ENCODE measurements at regions of chr2 and their contacts with region 1.

Region 1: GRCh38 chr2:85066874-85067351 is 66.3 kb upstream of the TCF7L1 start:
- DNase-seq: peak; percentile 83 to 85
- H3K4me3 ChIP-seq: peak overlapping the region; percentile 30
- H3K4me3 Mint-ChIP-seq: peak overlapping the region; percentile 67
- H3K27ac Mint-ChIP-seq: no peak overlapping the region
- H3K4me1 ChIP-seq: 0 out of 2 replicates have a peak, but pooled peaks cover 5% of the 10 kb centered on the region
- H3K4me1 Mint-ChIP-seq: no peaks in the 10 kb centered on the region
- H3K27me3 ChIP-seq: no peaks in the 10 kb centered on the region
- H3K27me3 Mint-ChIP-seq: peaks cover 2% of the 10 kb centered on the region
- CTCF ChIP-seq: peak; percentile 88 to 91

Region 2: GRCh38 chr2:85199698-85200097 is 132.8 kb after region 1 on chr2:
- CTCF ChIA-PET with region 1: no interaction called
- POLR2A ChIA-PET with region 1: no interaction called
- intact Hi-C with region 1: no loop called
- DNase-seq: no peak
- H3K4me3 ChIP-seq: no peak overlapping the region
- H3K4me3 Mint-ChIP-seq: no peak overlapping the region
- H3K27ac Mint-ChIP-seq: no peak overlapping the region
- H3K4me1 ChIP-seq: no peaks in the 10 kb centered on the region
- H3K4me1 Mint-ChIP-seq: no peaks in the 10 kb centered on the region
- H3K27me3 ChIP-seq: no peaks in the 10 kb centered on the region
- H3K27me3 Mint-ChIP-seq: no peaks in the 10 kb centered on the region
- CTCF ChIP-seq: no peak

Region 3: DNA sequence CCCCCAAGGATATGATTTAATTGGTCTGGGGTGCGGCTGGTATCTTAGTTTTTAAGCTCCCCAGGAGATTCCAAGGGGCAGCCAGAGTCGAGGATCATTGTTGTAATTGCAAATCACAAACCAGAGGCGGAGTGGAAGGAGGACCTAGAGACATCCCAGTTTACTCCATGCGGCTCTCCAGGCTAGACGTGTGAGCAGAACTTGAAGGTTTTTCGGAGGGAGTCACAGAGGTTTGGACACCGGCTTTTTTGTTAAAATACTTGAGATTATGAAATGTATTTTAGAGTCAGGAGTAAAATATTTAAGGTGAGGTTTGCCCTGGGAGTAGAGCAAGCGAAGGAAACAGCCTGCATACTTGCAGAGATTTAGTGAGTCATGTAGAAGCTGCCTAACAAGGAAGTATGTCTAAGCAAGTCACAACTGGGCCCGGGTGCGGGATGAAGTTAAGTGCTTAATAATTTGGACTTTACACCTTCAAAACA is 221.4 kb after region 1 on chr2:
- CTCF ChIA-PET with region 1: interaction called, 20 read pairs
- POLR2A ChIA-PET with region 1: interaction called, 3 read pairs
- intact Hi-C with region 1: loop called (anchors 1 kb)
- DNase-seq: peak; percentile 55 to 61
- H3K4me3 ChIP-seq: no peak overlapping the region
- H3K4me3 Mint-ChIP-seq: peak overlapping the region; percentile 10
- H3K27ac Mint-ChIP-seq: peak overlapping the region; percentile 63
- H3K4me1 ChIP-seq: peaks cover 16% of the 10 kb centered on the region
- H3K4me1 Mint-ChIP-seq: peaks cover 24% of the 10 kb centered on the region
- H3K27me3 ChIP-seq: no peaks in the 10 kb centered on the region
- H3K27me3 Mint-ChIP-seq: no peaks in the 10 kb centered on the region
- CTCF ChIP-seq: no peak

Region 4: DNA sequence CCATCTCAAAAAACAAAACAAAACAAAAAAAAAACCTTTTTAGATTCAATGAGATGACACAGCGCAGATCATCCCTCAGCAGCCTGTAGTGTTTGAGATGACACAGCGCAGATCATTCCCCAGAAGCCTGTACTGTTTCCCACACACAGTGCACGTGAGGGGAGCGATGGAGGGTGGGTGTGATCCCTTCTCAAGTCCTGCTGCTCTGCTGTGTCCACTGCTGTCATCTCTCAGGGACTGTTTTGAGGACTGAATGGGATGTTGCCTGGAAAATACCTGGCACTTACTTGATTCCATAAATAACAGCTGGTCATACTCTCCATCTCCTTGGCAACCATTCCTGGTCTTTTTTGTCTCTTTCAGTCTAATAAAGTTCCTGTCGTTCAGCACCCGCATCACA is 235.2 kb after region 1 on chr2:
- CTCF ChIA-PET with region 1: interaction called, 38 read pairs
- POLR2A ChIA-PET with region 1: no interaction called
- intact Hi-C with region 1: loop called (anchors 1 kb)
- DNase-seq: no peak
- H3K4me3 ChIP-seq: no peak overlapping the region
- H3K4me3 Mint-ChIP-seq: no peak overlapping the region
- H3K27ac Mint-ChIP-seq: no peak overlapping the region
- H3K4me1 ChIP-seq: peaks cover 6% of the 10 kb centered on the region
- H3K4me1 Mint-ChIP-seq: peaks cover 9% of the 10 kb centered on the region
- H3K27me3 ChIP-seq: no peaks in the 10 kb centered on the region
- H3K27me3 Mint-ChIP-seq: no peaks in the 10 kb centered on the region
- CTCF ChIP-seq: no peak

Region 5: GRCh38 chr2:85551698-85552678 is 485.1 kb after region 1 on chr2:
- CTCF ChIA-PET with region 1: no interaction called
- POLR2A ChIA-PET with region 1: no interaction called
- intact Hi-C with region 1: loop called (anchors 5 kb)
- DNase-seq: peak; percentile 81 to 89
- H3K4me3 ChIP-seq: no peak overlapping the region
- H3K4me3 Mint-ChIP-seq: no peak overlapping the region
- H3K27ac Mint-ChIP-seq: no peak overlapping the region
- H3K4me1 ChIP-seq: no peaks in the 10 kb centered on the region
- H3K4me1 Mint-ChIP-seq: no peaks in the 10 kb centered on the region
- H3K27me3 ChIP-seq: no peaks in the 10 kb centered on the region
- H3K27me3 Mint-ChIP-seq: no peaks in the 10 kb centered on the region
- CTCF ChIP-seq: peak; percentile 93